Mammary epithelial cell (primary cell): ENCODE measurements at regions of chr2 and their contacts with region 1.

Region 1: GRCh38 chr2:42685303-42685702 is 78.6 kb downstream of the OXER1 start:
- DNase-seq: no peak
- H3K4me3 ChIP-seq: no peak overlapping the region
- H3K27ac ChIP-seq: no peak overlapping the region
- H3K4me1 ChIP-seq: no peaks in the 10 kb centered on the region
- H3K27me3 ChIP-seq: no peaks in the 10 kb centered on the region
- CTCF ChIP-seq: no peak

Region 2: DNA sequence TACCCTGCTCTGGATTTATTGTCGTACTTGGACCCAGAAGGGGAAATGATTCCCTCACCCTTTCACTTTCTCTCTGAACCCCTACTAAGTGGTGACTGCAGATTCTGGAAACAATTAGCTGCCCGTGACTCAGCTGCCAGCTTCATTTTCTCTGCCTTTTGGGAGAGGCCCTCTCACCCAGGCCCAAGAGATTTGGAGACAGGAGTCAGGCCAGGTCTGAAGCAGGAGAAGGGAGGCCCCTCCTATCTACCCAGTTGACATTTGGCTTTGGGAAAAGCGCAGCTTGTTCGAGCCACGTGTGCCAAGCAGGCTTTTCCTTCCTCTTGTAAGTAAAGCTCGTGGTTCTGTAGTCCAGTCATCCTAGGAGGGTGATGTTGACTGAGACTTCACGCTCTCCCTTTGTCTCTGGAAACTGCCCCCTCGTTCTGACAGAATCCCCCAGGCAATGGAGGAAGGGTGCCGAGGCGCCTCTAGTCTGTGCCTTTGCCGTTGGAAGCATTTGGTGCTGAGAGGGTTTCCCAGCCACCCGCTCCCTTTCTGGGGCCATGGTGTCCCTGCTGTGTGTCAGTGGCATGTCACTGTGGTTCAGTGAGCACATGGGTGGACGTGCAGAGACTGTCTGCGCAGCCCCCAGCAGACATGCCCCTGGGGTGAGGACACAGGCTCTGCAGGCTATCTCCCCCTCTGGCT is 70.0 kb after region 1 on chr2:
- CTCF ChIA-PET with region 1: no interaction called
- dilution Hi-C with region 1: loop called (anchors 5 kb)
- in situ Hi-C with region 1: no loop called
- intact Hi-C with region 1: no loop called
- DNase-seq: no peak
- H3K4me3 ChIP-seq: no peak overlapping the region
- H3K27ac ChIP-seq: no peak overlapping the region
- H3K4me1 ChIP-seq: no peaks in the 10 kb centered on the region
- H3K27me3 ChIP-seq: no peaks in the 10 kb centered on the region
- CTCF ChIP-seq: no peak